ENCODE measurements at regions of chr1 and their contacts with region 1.

Region 1: GRCh38 chr1:17606826-17607440 is 67.4 kb downstream of the ARHGEF10L start:
- DNase-seq: no peak
- H3K4me3 ChIP-seq: no peak overlapping the region
- CTCF ChIP-seq: peak; percentile 93

Region 2: DNA sequence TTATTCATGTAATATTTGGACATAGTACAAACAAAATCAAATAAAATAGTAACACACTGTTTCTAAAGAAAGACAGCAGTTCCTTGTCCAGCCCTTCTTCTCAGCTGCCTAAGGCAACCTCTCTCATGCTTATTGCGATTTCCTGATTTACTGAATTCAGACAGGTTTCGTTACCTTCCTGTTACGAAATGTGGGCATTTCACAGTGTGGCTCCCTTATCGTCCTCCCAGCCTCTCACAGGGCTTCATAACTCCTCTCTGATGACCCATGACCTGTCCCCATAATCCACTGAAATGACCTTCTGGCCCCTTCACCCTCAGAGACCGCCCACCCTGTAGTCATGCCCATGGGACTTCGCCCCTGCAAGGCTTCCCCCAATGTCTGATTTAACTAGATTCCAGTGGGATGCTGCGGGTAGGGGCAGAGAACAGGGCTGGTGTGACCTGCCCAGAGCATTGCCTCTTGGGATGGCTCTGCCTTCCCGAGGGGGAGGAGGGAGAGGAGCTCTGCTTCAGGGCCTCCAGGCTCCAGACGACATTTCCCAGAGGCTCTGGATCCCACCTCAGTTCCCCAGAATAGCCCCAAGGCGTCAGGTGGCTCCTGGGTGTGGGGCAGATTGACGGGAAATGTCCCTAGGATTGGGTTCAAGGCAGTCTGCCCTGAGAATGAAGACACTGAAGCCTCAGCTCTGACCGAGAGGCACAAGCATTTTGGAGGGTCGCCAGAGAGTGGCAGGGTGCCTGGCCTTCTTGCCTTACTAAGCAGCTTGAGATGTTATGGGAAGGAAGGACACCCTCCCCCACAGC is 508.3 kb before region 1 on chr1:
- CTCF ChIA-PET with region 1: no interaction called
- POLR2A ChIA-PET with region 1: no interaction called
- DNase-seq: no peak
- H3K4me3 ChIP-seq: no peak overlapping the region
- CTCF ChIP-seq: no peak

Region 3: GRCh38 chr1:17502326-17502778 is 104.6 kb before region 1 on chr1:
- CTCF ChIA-PET with region 1: interaction called, 1,054 read pairs
- POLR2A ChIA-PET with region 1: interaction called, 4 read pairs
- DNase-seq: peak; percentile 57
- H3K4me3 ChIP-seq: no peak overlapping the region
- CTCF ChIP-seq: peak; percentile 96

Region 4: DNA sequence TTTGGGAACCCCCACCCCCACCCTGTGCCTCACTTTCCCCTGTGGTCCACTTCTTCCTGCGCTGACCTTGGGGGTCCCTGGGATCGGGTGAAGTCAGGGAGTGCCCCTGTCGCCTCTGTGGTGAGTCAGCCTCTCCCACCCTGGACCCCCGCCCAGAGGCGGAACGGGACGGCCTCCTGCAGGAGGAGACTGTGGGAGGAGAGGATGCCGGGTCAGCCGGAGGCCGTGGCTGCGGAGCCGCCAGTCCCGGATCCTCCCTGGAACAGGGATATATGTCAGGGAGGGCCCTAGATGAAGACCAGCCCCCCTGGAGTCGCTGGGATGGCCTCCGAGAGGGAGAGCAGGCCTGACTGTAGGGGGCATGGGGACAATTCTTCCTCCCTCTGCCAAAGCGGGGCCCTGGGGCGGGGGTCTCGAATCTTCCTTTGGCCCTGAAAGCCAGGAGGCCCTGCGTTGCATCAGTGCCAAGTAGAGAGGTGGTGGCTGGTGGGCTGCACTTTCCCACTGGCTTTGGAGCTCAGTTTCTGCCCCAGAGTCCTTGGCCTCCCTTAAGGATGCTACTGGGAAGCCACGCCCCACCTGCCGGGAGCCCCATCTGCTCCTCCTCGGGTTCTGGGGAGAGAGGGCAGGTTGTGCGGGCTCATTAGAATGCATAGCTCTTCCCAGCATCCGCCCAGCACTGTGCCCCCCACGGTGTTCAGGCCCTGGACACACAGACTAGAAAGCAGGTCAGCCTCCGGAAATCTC is 66.5 kb before region 1 on chr1:
- CTCF ChIA-PET with region 1: interaction called, 10 read pairs
- POLR2A ChIA-PET with region 1: no interaction called
- DNase-seq: no peak
- H3K4me3 ChIP-seq: peak overlapping the region; percentile 79
- CTCF ChIP-seq: no peak

Region 5: GRCh38 chr1:17574516-17574915 is 32.4 kb before region 1 on chr1:
- CTCF ChIA-PET with region 1: interaction called, 24 read pairs
- POLR2A ChIA-PET with region 1: no interaction called
- DNase-seq: no peak
- H3K4me3 ChIP-seq: no peak overlapping the region
- CTCF ChIP-seq: peak; percentile 20

Region 6: GRCh38 chr1:17587989-17588685 is 18.8 kb before region 1 on chr1:
- CTCF ChIA-PET with region 1: interaction called, 97 read pairs
- POLR2A ChIA-PET with region 1: no interaction called
- DNase-seq: no peak
- H3K4me3 ChIP-seq: peak overlapping the region; percentile 30
- CTCF ChIP-seq: no peak

Region 7: DNA sequence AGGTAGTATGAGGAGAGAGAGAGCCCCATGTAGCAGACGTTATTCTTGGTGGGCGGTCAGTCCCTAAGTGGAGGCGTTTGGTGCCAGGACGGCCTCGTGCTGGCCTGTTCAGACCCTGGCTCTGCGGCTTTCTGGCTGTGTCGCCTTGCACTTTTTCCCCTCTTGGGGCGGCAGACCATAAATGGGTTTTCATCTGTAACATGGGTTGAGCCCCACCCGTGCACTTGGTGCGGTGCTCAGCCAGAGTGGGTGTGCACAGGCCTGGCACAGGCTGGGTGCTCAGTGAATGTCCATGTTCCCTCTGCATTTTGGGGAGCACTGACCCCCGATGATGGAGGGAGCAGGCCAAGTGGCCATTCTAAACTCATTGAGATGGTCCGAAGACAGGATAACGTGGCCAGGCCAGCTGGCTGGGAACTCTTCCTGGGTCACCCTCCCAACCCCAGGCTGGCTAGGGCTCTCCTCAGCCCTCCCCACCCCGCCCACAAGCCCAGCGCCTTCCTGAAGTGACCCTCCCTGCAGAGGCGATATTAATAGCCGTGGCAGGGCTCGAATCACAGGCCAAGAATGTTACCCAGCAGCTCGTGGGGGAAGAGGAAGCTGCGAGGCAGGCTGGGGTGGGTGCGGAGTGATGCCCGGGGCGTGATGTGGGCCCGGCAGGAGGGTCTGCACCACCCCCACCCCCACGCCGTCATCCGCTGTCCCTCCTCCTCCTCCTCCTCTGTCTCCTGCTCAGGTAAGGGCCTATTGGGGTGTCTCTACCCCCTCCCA is 11.0 kb after region 1 on chr1:
- CTCF ChIA-PET with region 1: interaction called, 31 read pairs
- POLR2A ChIA-PET with region 1: no interaction called
- DNase-seq: no peak
- H3K4me3 ChIP-seq: no peak overlapping the region; the same call in 1 of the 2 replicates
- CTCF ChIP-seq: no peak

Region 8: DNA sequence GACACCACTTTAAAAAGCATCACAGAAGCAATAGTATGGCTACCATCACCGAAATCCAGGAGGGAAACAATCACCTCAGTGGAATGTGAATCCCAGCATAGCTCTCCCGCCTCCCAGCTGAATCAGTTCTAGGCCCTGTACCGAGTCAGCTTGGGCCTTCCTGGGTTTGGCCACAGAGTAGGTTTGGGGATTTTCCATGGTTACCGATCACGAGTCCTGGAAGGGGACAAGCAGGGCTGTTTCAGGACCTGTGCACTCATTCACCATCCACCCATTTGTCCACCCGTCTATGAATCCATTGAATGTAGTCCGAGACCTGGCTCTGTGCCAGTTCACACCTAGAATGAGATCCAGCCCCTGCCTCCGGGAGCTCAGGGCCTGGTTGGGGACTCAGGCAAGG is 26.7 kb after region 1 on chr1:
- CTCF ChIA-PET with region 1: interaction called, 21 read pairs
- POLR2A ChIA-PET with region 1: no interaction called
- DNase-seq: peak; percentile 40
- H3K4me3 ChIP-seq: no peak overlapping the region
- CTCF ChIP-seq: no peak

Measured in AG04449 (cell line).